ENCODE measurements at regions of chr22 and their contacts with region 1.

Region 1: GRCh38 chr22:30396871-30397655 is at the start of gene SEC14L2:
- DNase-seq: peak; percentile 42 to 60 (median 48)
- H3K4me3 ChIP-seq: peak within 1 kb of the TSS; percentile 18 to 29
- H3K4me3 Mint-ChIP-seq: peak within 1 kb of the TSS; percentile 83 to 95 (median 90)
- H3K27ac ChIP-seq: peak within 1 kb of the TSS; percentile 39
- H3K27ac Mint-ChIP-seq: peak within 1 kb of the TSS in 6 of 7 donors; percentile 57 to 93 (median 88)
- H3K4me1 ChIP-seq: peaks cover 27% of the 10 kb centered on the region
- H3K4me1 Mint-ChIP-seq: peaks cover 16 to 34% (median 27%) of the 10 kb centered on the region in 4 donors
- H3K27me3 ChIP-seq: no peaks in the 10 kb centered on the region
- H3K27me3 Mint-ChIP-seq: peaks cover 0 to 2% of the 10 kb centered on the region in 2 donors
- total RNA-seq, gene SEC14L2: 6.0 to 8.6 TPM

Region 2: DNA sequence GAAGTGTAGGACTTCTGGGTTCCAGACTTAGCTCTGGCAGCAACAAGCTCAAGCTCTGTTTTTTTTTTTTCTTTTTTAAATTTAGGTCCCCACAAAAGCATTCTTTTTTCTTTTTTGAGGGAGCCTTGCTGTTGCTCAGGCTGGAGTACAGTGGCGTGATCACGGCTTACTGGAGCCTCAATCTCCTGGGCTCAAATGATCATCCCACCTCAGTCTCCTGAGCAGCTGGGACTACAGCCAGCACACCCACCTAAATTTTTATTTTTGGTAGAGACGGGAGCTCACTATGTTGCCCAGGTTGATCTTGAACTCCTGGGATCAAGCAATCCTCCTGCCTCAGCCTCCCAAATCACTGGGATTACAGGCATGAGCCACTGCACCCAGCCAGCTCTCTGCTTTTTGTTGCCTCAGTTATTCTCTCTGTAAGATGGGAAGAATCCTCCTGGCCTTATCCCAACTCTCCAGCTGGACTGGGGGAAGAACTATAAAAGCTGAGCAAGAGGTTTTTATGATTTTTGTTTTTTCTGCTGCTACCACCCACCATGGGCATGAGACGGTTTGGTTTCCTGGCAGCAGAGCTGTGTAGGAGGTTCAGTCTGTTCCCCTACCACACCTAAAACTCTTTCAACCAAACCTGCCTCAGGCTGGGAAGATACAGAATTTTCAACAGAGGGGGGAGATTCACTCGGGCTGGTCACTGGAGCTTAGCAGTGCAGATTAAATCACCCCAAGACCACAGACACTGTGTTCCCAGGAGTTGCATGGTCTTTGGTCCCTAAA is 16.9 kb after region 1 on chr22:
- CTCF ChIA-PET with region 1: interaction called, 4 read pairs
- POLR2A ChIA-PET with region 1: interaction called, 15 read pairs
- intact Hi-C with region 1: no loop called
- DNase-seq: no peak
- H3K4me3 ChIP-seq: no peak overlapping the region
- H3K4me3 Mint-ChIP-seq: peak overlapping the region in 1 of 8 donors; percentile 55
- H3K27ac ChIP-seq: no peak overlapping the region
- H3K27ac Mint-ChIP-seq: peak overlapping the region; percentile 44 to 94 (median 59)
- H3K4me1 ChIP-seq: peaks cover 7% of the 10 kb centered on the region
- H3K4me1 Mint-ChIP-seq: peaks cover 9 to 20% (median 14%) of the 10 kb centered on the region in 4 donors
- H3K27me3 ChIP-seq: no peaks in the 10 kb centered on the region
- H3K27me3 Mint-ChIP-seq: no peaks in the 10 kb centered on the region

Region 3: GRCh38 chr22:30485362-30485988 is 88.4 kb after region 1 on chr22:
- CTCF ChIA-PET with region 1: interaction called, 86 read pairs
- POLR2A ChIA-PET with region 1: interaction called, 3 read pairs
- intact Hi-C with region 1: no loop called
- DNase-seq: peak; percentile 70 to 77 (median 71)
- H3K4me3 ChIP-seq: no peak overlapping the region
- H3K4me3 Mint-ChIP-seq: no peak overlapping the region
- H3K27ac ChIP-seq: no peak overlapping the region
- H3K27ac Mint-ChIP-seq: peak overlapping the region in 2 of 7 donors; percentile 47 to 73
- H3K4me1 ChIP-seq: no peaks in the 10 kb centered on the region
- H3K4me1 Mint-ChIP-seq: peaks cover 0 to 3% (median 0%) of the 10 kb centered on the region in 4 donors
- H3K27me3 ChIP-seq: no peaks in the 10 kb centered on the region
- H3K27me3 Mint-ChIP-seq: peaks cover 1 to 4% of the 10 kb centered on the region in 2 donors